Activated CD8-positive, alpha-beta T cell treated with anti-CD3 and anti-CD28 coated beads for 36 hours (primary cell): ENCODE measurements at regions of chr12 and their contacts with region 1.

Region 1: GRCh38 chr12:55728939-55729823 is at the start of gene CD63:
- DNase-seq: peak; percentile 93
- ATAC-seq: peak; percentile 82
- H3K4me3 Mint-ChIP-seq: peak within 1 kb of the TSS; percentile 85
- H3K27ac Mint-ChIP-seq: peak within 1 kb of the TSS; percentile 90
- H3K4me1 Mint-ChIP-seq: peaks cover 33% of the 10 kb centered on the region
- H3K27me3 Mint-ChIP-seq: no peaks in the 10 kb centered on the region
- CTCF ChIP-seq: no peak
- total RNA-seq, gene CD63: 99.6 to 101 TPM

Region 2: GRCh38 chr12:55320201-55320600 is 409.0 kb before region 1 on chr12:
- CTCF ChIA-PET with region 1: no interaction called
- POLR2A ChIA-PET with region 1: no interaction called
- intact Hi-C with region 1: no loop called
- DNase-seq: no peak
- ATAC-seq: no peak
- H3K4me3 Mint-ChIP-seq: no peak overlapping the region
- H3K27ac Mint-ChIP-seq: no peak overlapping the region
- H3K4me1 Mint-ChIP-seq: no peaks in the 10 kb centered on the region
- H3K27me3 Mint-ChIP-seq: peaks cover 9% of the 10 kb centered on the region
- CTCF ChIP-seq: no peak

Region 3: GRCh38 chr12:55700255-55701018 is 28.7 kb before region 1 on chr12:
- CTCF ChIA-PET with region 1: no interaction called
- POLR2A ChIA-PET with region 1: no interaction called
- intact Hi-C with region 1: no loop called
- DNase-seq: no peak
- ATAC-seq: no peak
- H3K4me3 Mint-ChIP-seq: no peak overlapping the region
- H3K27ac Mint-ChIP-seq: no peak overlapping the region
- H3K4me1 Mint-ChIP-seq: no peaks in the 10 kb centered on the region
- H3K27me3 Mint-ChIP-seq: no peaks in the 10 kb centered on the region
- CTCF ChIP-seq: no peak

Region 4: GRCh38 chr12:55715833-55716581 is 13.2 kb before region 1 on chr12 and contains the start of gene BLOC1S1:
- CTCF ChIA-PET with region 1: interaction called, 20 read pairs
- POLR2A ChIA-PET with region 1: interaction called, 44 read pairs
- intact Hi-C with region 1: no loop called
- DNase-seq: peak; percentile 97
- ATAC-seq: peak; percentile 97
- H3K4me3 Mint-ChIP-seq: peak within 1 kb of the TSS; percentile 94
- H3K27ac Mint-ChIP-seq: peak within 1 kb of the TSS; percentile 92
- H3K4me1 Mint-ChIP-seq: peaks cover 24% of the 10 kb centered on the region
- H3K27me3 Mint-ChIP-seq: peaks cover 3% of the 10 kb centered on the region
- CTCF ChIP-seq: no peak
- total RNA-seq, gene BLOC1S1: 79.0 to 84.6 TPM